ENCODE measurements at regions of chr22 and their contacts with region 1.

Region 1: GRCh38 chr22:43346521-43346929 is 3.4 kb upstream of the SCUBE1 start:
- DNase-seq: peak; percentile 65
- ATAC-seq: peak; percentile 59 to 65

Region 2: GRCh38 chr22:43230971-43231723 is 115.4 kb before region 1 on chr22:
- intact Hi-C with region 1: loop called in 1 of 2 experiments (anchors 5 kb)
- DNase-seq: peak; percentile 43
- ATAC-seq: peak; percentile 25 to 50

Region 3: GRCh38 chr22:43273902-43274484 is 72.5 kb before region 1 on chr22:
- intact Hi-C with region 1: loop called (anchors 1 to 2 kb)
- DNase-seq: no peak
- ATAC-seq: peak; percentile 60 to 70

Region 4: GRCh38 chr22:43796567-43796966 is 450.0 kb after region 1 on chr22:
- intact Hi-C with region 1: no loop called
- DNase-seq: no peak
- ATAC-seq: peak; percentile 65 to 80